MCF 10A (cell line): ENCODE measurements at regions of chr6 and their contacts with region 1.

Region 1: DNA sequence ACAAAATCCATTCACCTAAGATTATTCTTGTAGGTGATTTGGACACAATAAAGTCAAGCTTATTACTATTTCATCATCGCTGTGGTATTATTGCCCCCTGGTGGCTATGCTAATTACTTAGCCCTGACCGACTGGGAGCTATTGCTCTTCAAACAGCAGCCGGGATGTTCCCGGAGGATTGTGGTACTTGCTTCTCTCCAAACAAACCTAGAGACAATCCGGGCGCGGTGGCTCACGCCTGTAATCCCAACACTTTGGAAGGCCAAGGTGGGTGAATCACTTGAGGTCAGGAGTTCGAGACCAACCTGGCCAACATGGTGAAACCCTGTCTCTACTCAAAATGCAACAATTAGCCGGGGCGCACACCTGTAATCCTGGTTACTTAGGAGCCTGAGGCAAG is 15.4 kb upstream of the STMND1 start:
- DNase-seq: peak; percentile 76
- H3K4me3 Mint-ChIP-seq: no peak overlapping the region
- H3K27ac Mint-ChIP-seq: no peak overlapping the region
- H3K4me1 Mint-ChIP-seq: no peaks in the 10 kb centered on the region
- H3K27me3 Mint-ChIP-seq: no peaks in the 10 kb centered on the region
- CTCF ChIP-seq: peak; percentile 57

Region 2: GRCh38 chr6:16403831-16404230 is 682.6 kb before region 1 on chr6:
- CTCF ChIA-PET with region 1: interaction called, 3 read pairs
- POLR2A ChIA-PET with region 1: no interaction called
- intact Hi-C with region 1: loop called (anchors 2 kb)
- DNase-seq: no peak
- H3K4me3 Mint-ChIP-seq: no peak overlapping the region
- H3K27ac Mint-ChIP-seq: no peak overlapping the region
- H3K4me1 Mint-ChIP-seq: no peaks in the 10 kb centered on the region
- H3K27me3 Mint-ChIP-seq: no peaks in the 10 kb centered on the region
- CTCF ChIP-seq: peak; percentile 23

Region 3: DNA sequence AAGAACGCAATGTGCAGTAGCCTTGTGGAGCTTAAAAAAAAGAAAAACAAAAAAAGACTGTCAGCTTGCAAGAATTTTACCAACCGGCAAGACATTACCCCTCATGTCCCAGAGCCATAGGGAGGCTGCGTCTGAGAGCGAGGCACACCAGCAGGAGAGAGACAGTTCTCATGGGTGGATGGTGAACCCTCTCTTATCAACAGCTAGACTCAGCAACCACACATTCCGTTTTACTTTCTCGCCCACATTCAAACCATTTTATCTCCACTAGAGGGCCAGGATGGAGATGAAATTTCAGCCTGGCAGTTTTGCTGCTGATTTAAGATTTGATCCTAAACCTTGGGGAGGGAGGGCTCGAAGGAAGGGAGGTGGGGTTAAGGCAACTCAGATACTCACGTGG is 572.2 kb before region 1 on chr6:
- CTCF ChIA-PET with region 1: interaction called, 9 read pairs
- POLR2A ChIA-PET with region 1: interaction called, 3 read pairs
- intact Hi-C with region 1: loop called (anchors 5 kb)
- DNase-seq: peak; percentile 29
- H3K4me3 Mint-ChIP-seq: no peak overlapping the region
- H3K27ac Mint-ChIP-seq: no peak overlapping the region
- H3K4me1 Mint-ChIP-seq: peaks cover 10% of the 10 kb centered on the region
- H3K27me3 Mint-ChIP-seq: no peaks in the 10 kb centered on the region
- CTCF ChIP-seq: peak; percentile 20

Region 4: DNA sequence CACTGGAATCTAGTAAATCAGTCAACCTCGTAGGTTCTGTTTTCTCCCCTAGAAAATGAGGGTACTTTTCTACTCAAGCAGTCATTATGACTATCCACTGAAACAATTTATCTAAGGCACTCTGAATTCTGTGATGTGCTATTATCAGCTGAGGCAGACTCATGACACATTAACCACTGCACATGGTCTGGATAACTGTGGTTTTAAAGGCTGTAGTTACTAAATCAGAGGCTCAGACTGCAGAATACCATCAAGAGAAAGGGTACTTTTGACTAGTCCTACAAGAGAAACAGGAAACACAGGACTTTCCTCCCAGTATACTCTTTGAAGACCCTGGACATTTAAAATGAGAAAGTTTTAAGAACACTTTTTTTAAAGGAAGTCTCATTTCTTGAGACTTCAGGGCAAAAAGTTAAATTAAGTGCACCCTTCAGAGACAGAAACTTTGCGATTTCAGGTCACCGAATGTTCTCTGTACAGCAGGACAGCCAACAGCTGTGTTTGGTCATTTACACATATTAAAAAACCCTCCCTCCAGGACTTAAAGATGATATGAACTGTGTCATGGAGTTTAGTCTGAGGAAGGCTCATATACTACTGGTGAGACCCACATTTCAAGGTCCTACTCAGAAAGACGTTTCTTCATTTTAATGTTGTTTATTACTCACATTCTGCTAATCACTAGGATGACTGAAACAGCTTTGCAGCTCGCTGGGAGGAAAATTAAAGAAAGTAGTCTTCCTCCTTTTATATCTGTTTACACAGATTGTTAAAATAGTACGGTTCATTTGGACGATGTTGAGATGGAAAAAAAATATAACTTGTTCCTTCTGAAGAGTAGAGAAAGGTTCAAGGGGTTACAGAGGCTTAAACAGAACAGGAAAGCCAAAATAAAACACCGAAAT is 345.1 kb before region 1 on chr6:
- CTCF ChIA-PET with region 1: interaction called, 3 read pairs
- POLR2A ChIA-PET with region 1: no interaction called
- intact Hi-C with region 1: loop called (anchors 1 kb)
- DNase-seq: no peak
- H3K4me3 Mint-ChIP-seq: no peak overlapping the region
- H3K27ac Mint-ChIP-seq: no peak overlapping the region
- H3K4me1 Mint-ChIP-seq: peaks cover 27% of the 10 kb centered on the region
- H3K27me3 Mint-ChIP-seq: no peaks in the 10 kb centered on the region
- CTCF ChIP-seq: no peak

Region 5: GRCh38 chr6:17233531-17233930 is 147.1 kb after region 1 on chr6:
- CTCF ChIA-PET with region 1: no interaction called
- POLR2A ChIA-PET with region 1: no interaction called
- intact Hi-C with region 1: no loop called
- DNase-seq: peak; percentile 79
- H3K4me3 Mint-ChIP-seq: no peak overlapping the region
- H3K27ac Mint-ChIP-seq: no peak overlapping the region
- H3K4me1 Mint-ChIP-seq: peaks cover 7% of the 10 kb centered on the region
- H3K27me3 Mint-ChIP-seq: no peaks in the 10 kb centered on the region
- CTCF ChIP-seq: no peak